Aorta (tissue), 5 donors: ENCODE measurements at regions of chr10 and their contacts with region 1.

Region 1: DNA sequence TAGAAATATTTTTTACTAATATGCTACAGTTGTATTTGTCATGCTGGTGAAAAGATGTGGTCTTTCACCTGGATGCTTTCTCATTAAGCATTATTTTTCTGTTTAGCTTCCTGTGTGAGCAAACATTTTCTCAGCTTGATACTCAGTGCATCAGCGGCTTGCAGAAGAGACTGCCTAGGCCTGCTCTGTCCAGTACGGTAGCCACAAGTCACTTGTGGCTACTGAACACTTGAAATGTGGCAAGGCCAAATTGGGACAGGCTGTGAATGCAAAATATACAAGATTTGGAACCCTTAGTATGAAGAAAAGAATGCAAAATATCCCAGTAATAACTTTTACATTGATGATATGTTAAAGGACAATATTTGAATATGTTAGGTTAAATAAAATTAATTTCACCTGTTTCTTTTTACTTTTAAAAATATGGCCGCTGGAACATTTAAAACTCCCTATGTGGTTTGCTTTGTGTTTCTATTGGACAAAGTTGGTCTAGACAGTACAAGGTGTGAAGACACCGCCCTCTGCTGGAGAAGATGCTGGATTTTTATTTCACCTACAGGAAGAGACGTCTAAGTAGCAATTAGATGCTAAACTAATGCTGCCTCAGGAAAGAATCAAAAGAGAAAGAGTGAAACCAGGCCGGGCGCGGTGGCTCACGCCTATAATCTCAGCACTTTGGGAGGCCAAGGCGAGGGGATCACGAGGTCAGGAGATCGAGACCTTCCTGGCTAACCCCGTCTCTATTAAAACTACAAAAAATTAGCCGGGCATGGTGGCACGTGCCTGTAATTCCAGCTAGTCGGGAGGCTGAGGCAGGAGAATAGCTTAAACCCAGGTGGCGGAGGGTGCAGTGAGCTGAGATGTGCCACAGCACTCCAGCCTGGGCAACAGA is 5.3 kb downstream of the SRGN start:
- DNase-seq: peak; percentile 77 to 78
- ATAC-seq: peak; percentile 85
- H3K4me3 ChIP-seq: no peak overlapping the region
- H3K27ac ChIP-seq: peak overlapping the region in 1 of 2 donors; percentile 68
- H3K4me1 ChIP-seq: peaks cover 0 to 6% of the 10 kb centered on the region in 2 donors
- H3K27me3 ChIP-seq: no peaks in the 10 kb centered on the region

Region 2: DNA sequence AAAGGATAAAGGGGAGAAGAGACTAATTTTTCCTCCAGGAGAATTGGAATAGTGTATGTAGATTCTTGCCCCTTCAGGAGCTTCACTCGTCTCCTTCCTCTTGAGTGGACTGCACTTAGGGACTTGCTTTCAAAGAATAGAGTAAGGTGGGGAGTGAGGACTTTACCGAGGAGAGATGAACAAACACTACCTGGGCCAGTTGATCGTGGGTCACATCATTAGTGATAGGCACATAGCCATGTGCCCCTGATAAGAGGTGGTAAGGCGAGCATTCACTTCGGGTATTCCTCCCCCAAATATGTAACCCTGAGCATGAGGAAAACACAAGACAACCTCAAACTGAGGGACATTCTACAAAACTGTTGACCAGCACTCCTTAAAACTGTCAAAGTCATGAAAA is 119.2 kb before region 1 on chr10:
- intact Hi-C with region 1: no loop called
- DNase-seq: no peak
- ATAC-seq: no peak
- H3K4me3 ChIP-seq: no peak overlapping the region
- H3K27ac ChIP-seq: no peak overlapping the region
- H3K4me1 ChIP-seq: no peaks in the 10 kb centered on the region
- H3K27me3 ChIP-seq: no peaks in the 10 kb centered on the region

Region 3: GRCh38 chr10:68988530-68989316 is 104.5 kb before region 1 on chr10 and contains the start of gene KIFBP:
- intact Hi-C with region 1: loop called in 1 of 2 experiments (anchors 2 kb)
- DNase-seq: peak; percentile 95 to 96
- ATAC-seq: peak; percentile 97
- H3K4me3 ChIP-seq: peak within 1 kb of the TSS; percentile 91 to 96
- H3K27ac ChIP-seq: peak within 1 kb of the TSS; percentile 18 to 85
- H3K4me1 ChIP-seq: no peaks in the 10 kb centered on the region
- H3K27me3 ChIP-seq: no peaks in the 10 kb centered on the region
- total RNA-seq, gene KIFBP: 27.4 to 28.4 TPM

Region 4: DNA sequence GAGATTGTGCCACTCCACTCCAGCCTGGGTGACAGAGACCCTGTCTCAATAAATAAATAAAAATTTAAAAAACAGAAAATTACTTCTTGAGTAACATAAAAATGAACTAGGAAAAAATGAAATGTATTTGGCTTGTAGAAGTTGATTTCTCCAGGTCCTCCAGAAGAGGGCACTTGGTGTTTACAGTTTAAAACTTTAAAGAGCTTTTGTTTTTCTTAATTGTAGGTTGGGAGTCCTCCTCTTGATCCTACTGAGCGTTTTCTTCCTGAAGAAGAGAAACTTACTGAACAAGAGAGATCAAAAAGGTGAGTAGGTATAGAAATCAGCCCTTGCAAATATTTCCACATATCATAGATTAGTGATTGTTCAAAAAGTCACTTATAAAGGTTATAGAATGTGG is 88.4 kb before region 1 on chr10:
- intact Hi-C with region 1: loop called in 1 of 2 experiments (anchors 5 kb)
- DNase-seq: no peak
- ATAC-seq: peak; percentile 63
- H3K4me3 ChIP-seq: no peak overlapping the region
- H3K27ac ChIP-seq: no peak overlapping the region
- H3K4me1 ChIP-seq: no peaks in the 10 kb centered on the region
- H3K27me3 ChIP-seq: no peaks in the 10 kb centered on the region